Activated CD4-positive, alpha-beta T cell treated with anti-CD3 and anti-CD28 coated beads for 36 hours (primary cell): ENCODE measurements at regions of chr17 and their contacts with region 1.

Region 1: DNA sequence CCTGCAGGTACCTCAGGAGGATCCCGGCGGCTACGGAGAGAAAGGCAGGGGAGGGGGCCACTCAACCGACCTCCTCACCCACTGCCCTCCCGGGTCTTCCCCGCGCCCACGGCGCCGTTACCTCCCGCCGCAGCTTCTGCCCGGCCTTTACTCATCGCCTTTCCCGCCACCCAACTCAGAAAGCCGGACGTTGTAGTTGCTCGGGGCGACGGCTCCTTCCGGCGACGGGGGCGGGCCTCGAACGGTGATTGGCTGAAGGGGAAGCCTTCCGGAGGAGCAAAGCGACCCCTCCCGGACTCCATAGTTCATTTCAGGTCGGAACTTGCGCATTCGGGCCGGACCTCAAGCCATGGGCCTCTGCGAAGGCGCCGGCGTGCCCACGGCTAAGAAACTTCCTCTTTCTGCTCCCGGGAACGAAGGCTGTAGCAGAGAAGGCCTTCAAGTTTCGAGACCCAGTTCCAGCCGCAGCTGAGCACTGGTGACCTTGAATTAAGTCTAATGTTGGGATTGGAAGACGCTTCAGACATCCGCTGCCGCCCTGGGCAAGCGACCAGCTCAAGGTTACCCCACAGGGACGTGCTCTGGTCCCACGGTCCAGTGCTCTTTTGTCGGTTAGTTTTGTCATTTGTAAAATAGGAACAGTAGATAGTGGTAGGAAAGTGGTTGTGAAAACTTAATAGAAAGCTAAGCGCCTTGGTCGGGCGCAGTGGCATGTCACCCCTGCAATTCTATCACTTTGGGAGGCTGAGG is at the start of gene PSMC3IP:
- DNase-seq: peak; percentile 98
- ATAC-seq: peak; percentile 92
- H3K4me3 Mint-ChIP-seq: peak within 1 kb of the TSS; percentile 88
- H3K27ac Mint-ChIP-seq: peak within 1 kb of the TSS; percentile 98
- H3K4me1 Mint-ChIP-seq: peaks cover 28% of the 10 kb centered on the region
- H3K27me3 Mint-ChIP-seq: no peaks in the 10 kb centered on the region
- total RNA-seq, gene PSMC3IP: 27.0 to 28.9 TPM

Region 2: DNA sequence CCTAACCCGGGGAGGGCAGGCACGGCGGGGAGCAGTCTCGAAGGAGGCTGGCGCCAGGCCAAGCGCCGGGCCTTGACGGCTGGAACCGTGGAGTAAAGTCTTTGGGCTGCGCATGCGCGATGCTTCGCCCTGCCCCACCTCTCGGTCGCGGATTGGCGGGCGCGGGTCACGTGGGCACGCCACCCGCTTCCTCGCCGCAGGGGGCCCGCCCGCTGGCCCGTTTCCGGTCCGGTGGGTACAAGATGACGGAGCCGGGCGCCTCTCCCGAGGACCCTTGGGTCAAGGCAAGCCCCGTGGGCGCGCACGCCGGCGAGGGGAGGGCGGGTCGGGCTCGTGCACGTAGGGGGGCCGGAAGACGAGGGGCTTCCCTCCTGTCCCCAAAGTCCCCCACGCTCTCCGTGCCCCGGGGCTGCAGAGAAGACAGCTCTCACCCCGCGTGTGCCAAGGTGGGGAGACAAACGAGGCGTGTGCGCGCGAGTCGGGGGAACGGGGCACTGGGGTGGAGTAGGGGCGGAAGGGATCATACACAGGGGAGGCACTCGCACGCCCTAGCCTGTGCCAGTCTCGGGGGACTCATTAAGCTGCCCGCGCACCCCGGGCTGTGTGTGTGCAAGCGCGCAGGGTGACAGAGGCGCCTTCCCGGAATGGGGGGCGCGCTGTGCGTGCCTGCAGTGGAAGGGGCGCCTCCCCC is 10.7 kb before region 1 on chr17 and contains the start of gene MLX:
- CTCF ChIA-PET with region 1: interaction called, 29 read pairs
- POLR2A ChIA-PET with region 1: interaction called, 8 read pairs
- intact Hi-C with region 1: loop called (anchors 1 kb)
- DNase-seq: peak; percentile 95
- ATAC-seq: peak; percentile 74
- H3K4me3 Mint-ChIP-seq: peak within 1 kb of the TSS; percentile 96
- H3K27ac Mint-ChIP-seq: peak within 1 kb of the TSS; percentile 96
- H3K4me1 Mint-ChIP-seq: peaks cover 35% of the 10 kb centered on the region
- H3K27me3 Mint-ChIP-seq: no peaks in the 10 kb centered on the region
- total RNA-seq, gene MLX: 38.7 to 40.7 TPM

Region 3: DNA sequence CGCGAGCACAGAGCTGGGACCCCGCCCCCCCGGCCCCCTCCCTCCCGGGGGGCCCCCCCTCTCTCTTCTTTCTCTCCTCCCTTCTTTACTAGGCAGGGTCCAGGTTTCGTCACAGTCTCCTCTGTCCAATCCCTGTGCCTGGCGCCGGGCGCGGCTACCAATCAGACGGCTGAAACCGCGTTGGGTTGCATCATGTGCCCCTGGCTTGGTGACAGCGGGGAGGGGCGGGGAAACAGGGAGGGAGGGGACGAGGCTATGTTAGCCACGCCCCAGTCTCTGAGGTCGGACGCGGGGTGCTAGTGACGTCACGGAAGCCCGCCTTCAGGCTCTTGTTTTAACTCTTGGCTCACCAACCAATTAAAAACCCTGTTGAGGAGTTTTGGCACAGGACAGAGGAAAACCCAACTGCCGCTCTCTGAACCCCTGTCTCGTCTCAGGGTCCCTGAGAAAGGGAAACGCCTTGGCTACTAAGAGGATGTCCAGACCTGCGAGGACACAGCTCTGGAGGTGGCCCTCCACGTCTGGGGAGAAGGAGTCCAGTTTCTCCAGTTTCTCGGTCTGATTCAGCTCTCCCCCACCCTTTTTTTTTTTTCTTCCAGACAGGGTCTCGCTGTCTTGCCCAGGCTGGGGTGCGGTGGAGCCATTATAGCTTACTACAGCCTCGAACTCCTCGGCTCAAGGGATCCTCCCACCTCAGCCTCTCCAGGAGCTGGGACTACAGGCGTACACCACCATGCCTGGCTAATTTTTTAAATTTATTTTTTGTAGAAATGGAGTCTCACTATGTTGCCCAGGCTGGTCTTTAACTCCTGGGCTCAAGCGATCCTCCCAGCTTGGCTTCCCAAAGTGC is 99.5 kb after region 1 on chr17:
- CTCF ChIA-PET with region 1: interaction called, 44 read pairs
- POLR2A ChIA-PET with region 1: interaction called, 3 read pairs
- intact Hi-C with region 1: loop called (anchors 1 to 2 kb)
- DNase-seq: peak; percentile 100
- ATAC-seq: peak; percentile 84
- H3K4me3 Mint-ChIP-seq: peak overlapping the region; percentile 70
- H3K27ac Mint-ChIP-seq: peak overlapping the region; percentile 69
- H3K4me1 Mint-ChIP-seq: peaks cover 49% of the 10 kb centered on the region
- H3K27me3 Mint-ChIP-seq: peaks cover 29% of the 10 kb centered on the region

Region 4: GRCh38 chr17:42760652-42761581 is 183.2 kb after region 1 on chr17 and contains the start of gene RAMP2:
- CTCF ChIA-PET with region 1: interaction called, 34 read pairs
- POLR2A ChIA-PET with region 1: interaction called, 10 read pairs
- intact Hi-C with region 1: loop called (anchors 1 kb)
- DNase-seq: peak; percentile 44
- ATAC-seq: peak; percentile 27
- H3K4me3 Mint-ChIP-seq: no peak within 1 kb of the TSS
- H3K27ac Mint-ChIP-seq: no peak within 1 kb of the TSS
- H3K4me1 Mint-ChIP-seq: peaks cover 11% of the 10 kb centered on the region
- H3K27me3 Mint-ChIP-seq: peaks cover 48% of the 10 kb centered on the region
- total RNA-seq, gene RAMP2: not detected

Region 5: DNA sequence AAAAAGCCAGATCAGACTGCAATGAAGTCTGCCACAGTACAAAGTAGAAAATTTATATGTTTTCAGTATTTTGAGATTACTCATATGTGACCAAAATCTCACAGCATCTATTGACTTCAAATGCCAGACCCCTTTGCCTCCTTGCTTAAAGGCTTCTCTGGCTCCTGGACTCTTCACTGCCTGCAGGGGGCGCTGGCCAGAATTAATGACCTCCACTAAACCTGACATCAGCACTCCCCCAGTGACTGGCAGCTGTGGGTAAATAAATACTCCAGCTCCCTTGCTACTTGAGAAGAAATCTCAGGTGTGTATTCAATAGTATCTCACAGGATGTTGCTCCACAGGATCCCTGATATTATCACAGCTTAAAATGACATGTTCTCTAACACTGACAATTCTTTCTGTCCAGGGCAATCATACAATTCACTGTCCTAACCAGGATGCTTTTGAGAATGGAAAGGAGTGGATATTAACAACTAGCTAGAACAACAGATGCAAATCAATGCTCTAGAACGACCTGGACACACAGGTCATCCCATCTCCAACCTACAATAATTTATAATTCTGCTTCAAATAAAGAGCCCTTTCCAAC is 242.3 kb after region 1 on chr17:
- CTCF ChIA-PET with region 1: interaction called, 5 read pairs
- POLR2A ChIA-PET with region 1: interaction called, 4 read pairs
- intact Hi-C with region 1: loop called (anchors 1 to 5 kb)
- DNase-seq: peak; percentile 86
- ATAC-seq: peak; percentile 56
- H3K4me3 Mint-ChIP-seq: no peak overlapping the region
- H3K27ac Mint-ChIP-seq: no peak overlapping the region
- H3K4me1 Mint-ChIP-seq: peaks cover 28% of the 10 kb centered on the region
- H3K27me3 Mint-ChIP-seq: no peaks in the 10 kb centered on the region